ENCODE measurements at regions of chr5 and their contacts with region 1.

Region 1: DNA sequence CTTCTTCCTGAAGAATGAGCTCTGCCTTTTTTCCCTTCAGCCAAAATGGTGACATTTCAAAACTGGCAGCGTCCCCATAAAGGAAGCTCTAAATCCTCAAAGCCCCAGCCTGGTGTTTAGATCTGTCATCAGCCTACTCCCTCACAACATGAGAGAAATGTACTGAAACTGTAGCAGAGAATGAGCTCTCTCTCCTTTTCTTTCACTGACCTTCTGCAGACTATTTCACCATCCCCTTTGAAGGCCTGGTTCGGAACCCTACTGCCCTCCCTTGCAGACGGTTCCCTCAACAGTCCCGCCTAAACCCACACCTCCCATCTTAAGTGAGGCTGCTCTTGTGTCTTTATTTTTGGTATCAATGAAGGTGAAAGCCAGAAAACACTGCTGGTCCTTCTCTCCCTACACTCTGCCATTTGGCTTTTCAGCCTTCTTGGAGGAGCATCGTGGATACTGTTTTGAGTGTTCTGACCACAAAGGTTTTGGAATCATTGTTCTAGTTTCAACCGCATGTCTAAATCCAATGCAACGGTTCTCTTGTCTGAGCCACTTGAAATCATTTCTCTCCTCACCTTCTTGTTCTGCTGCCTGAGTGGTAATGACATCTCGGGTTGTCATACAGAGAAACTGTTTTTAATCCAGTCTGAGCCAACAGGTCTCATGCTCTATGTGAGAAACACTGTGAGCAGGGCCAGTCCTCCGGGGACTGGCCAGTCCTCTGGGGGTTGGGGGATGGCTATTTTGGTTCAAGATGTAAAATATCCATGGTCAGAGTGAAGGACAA is 39.0 kb downstream of the ITK start:
- DNase-seq: peak; percentile 65
- H3K4me3 Mint-ChIP-seq: peak overlapping the region; percentile 45
- H3K27ac Mint-ChIP-seq: peak overlapping the region; percentile 97
- H3K4me1 Mint-ChIP-seq: peaks cover 81% of the 10 kb centered on the region
- H3K27me3 Mint-ChIP-seq: no peaks in the 10 kb centered on the region

Region 2: GRCh38 chr5:156913355-156913718 is 306.3 kb before region 1 on chr5:
- CTCF ChIA-PET with region 1: no interaction called
- intact Hi-C with region 1: no loop called
- DNase-seq: no peak
- H3K4me3 Mint-ChIP-seq: no peak overlapping the region
- H3K27ac Mint-ChIP-seq: peak overlapping the region; percentile 87
- H3K4me1 Mint-ChIP-seq: peaks cover 58% of the 10 kb centered on the region
- H3K27me3 Mint-ChIP-seq: no peaks in the 10 kb centered on the region

Region 3: DNA sequence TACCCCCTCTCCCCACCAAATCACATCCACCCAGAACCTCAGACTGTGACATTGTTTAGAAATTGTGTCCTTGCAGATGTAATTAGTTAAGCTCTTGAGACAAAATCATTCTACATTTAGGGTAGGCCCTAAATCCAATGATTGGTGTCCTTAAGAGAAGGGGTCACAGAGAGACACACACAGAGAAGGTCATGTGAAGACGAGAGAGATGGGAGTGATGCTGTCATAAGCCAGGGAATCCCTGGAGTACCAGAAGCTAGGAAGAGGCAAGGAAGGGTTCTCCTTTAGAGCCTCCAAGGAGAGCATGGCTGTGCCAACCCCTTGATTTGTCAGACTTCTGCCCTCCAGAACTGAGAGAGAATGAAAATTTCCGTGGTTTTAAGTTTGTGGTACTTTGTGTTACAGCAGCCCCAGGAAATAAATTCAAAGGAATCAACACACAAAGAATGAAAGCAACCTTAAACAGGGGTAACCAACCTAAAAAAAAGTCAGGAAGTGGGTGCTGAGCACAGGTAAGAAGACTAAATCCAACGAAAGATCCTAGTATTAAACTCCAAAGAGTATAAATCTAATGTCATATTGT is 290.2 kb before region 1 on chr5:
- CTCF ChIA-PET with region 1: no interaction called
- intact Hi-C with region 1: loop called (anchors 2 kb)
- DNase-seq: peak; percentile 29
- H3K4me3 Mint-ChIP-seq: no peak overlapping the region
- H3K27ac Mint-ChIP-seq: peak overlapping the region; percentile 93
- H3K4me1 Mint-ChIP-seq: peaks cover 81% of the 10 kb centered on the region
- H3K27me3 Mint-ChIP-seq: no peaks in the 10 kb centered on the region

Region 4: DNA sequence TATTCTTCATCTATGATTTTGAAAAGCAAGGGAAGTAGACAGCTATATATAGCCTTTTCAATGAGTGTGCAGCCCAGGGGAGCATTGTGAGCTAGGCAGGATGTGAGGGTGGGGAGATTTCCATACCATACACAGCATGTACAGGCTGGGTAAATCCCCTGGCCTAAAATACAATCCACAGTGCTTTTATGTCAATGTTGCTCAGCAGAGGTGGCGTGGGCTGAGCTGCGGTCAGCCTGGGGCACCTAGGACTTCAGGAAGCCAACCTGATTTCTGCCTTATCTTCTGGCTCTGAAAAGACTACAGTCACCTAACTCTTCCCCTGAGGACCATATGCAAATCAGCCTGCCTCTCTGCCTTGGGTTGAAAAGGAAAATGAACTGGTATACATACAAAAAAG is 47.3 kb before region 1 on chr5:
- CTCF ChIA-PET with region 1: interaction called, 7 read pairs
- intact Hi-C with region 1: loop called (anchors 1 kb)
- DNase-seq: peak; percentile 96
- H3K4me3 Mint-ChIP-seq: peak overlapping the region; percentile 64
- H3K27ac Mint-ChIP-seq: peak overlapping the region; percentile 100
- H3K4me1 Mint-ChIP-seq: peaks cover 86% of the 10 kb centered on the region
- H3K27me3 Mint-ChIP-seq: no peaks in the 10 kb centered on the region

Region 5: GRCh38 chr5:157198277-157198986 is 21.2 kb before region 1 on chr5:
- CTCF ChIA-PET with region 1: interaction called, 10 read pairs
- intact Hi-C with region 1: loop called (anchors 1 kb)
- DNase-seq: peak; percentile 80
- H3K4me3 Mint-ChIP-seq: peak overlapping the region; percentile 48
- H3K27ac Mint-ChIP-seq: peak overlapping the region; percentile 100
- H3K4me1 Mint-ChIP-seq: peaks cover 93% of the 10 kb centered on the region
- H3K27me3 Mint-ChIP-seq: no peaks in the 10 kb centered on the region

Region 6: DNA sequence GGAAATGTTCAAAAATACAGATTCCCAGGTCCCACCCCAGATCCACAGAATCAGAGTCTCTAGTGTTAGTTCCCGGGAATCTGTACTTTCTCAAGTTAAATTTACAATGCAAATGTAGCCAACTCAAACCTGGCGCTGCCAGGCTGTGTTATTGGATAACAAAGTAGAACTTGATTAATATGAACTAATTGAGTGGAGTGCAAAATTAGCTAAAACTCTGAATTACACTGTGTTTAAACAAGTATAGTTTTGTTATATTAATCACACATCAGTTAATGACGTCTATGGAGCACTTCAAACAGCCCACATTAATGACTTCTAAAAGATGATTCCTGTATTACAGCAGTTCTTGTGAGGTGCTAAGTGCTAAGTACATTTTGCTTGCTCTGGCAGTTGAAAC is 13.8 kb after region 1 on chr5:
- CTCF ChIA-PET with region 1: interaction called, 4 read pairs
- intact Hi-C with region 1: loop called (anchors 1 kb)
- DNase-seq: peak; percentile 54
- H3K4me3 Mint-ChIP-seq: peak overlapping the region; percentile 53
- H3K27ac Mint-ChIP-seq: peak overlapping the region; percentile 96
- H3K4me1 Mint-ChIP-seq: peaks cover 82% of the 10 kb centered on the region
- H3K27me3 Mint-ChIP-seq: no peaks in the 10 kb centered on the region

Region 7: GRCh38 chr5:157253547-157253946 is 33.9 kb after region 1 on chr5:
- CTCF ChIA-PET with region 1: interaction called, 6 read pairs
- intact Hi-C with region 1: loop called (anchors 1 kb)
- DNase-seq: no peak
- H3K4me3 Mint-ChIP-seq: no peak overlapping the region
- H3K27ac Mint-ChIP-seq: peak overlapping the region; percentile 97
- H3K4me1 Mint-ChIP-seq: peaks cover 91% of the 10 kb centered on the region
- H3K27me3 Mint-ChIP-seq: no peaks in the 10 kb centered on the region

Region 8: DNA sequence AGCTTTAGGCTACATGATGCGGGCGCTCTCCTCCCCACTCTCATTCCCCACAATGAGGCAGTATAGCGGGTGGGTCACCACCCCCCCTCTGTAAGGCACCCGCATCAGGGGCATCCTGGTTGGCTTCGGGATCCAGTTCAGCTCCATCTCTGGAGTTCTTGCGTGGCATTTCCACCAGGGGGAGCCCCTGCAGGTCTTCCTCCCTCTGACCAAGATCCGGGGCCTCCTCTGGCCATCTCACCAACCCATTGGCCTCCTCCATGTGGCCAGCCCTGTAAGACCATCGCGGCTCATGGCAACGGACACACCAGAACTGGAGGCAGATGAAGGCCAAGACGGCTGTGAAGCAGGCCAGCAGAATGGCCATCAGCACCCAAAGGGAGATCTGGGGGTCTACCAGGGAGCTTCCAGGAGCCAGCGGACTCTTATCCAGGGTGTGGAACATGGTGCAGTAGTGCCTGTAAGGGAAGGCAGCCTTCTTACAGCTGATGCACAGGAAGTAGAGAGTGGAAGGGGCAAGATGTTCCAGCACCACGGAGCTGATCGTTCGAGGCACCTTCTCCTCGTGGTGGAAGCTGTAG is 123.2 kb after region 1 on chr5:
- CTCF ChIA-PET with region 1: no interaction called
- intact Hi-C with region 1: no loop called
- DNase-seq: peak; percentile 51
- H3K4me3 Mint-ChIP-seq: no peak overlapping the region
- H3K27ac Mint-ChIP-seq: no peak overlapping the region
- H3K4me1 Mint-ChIP-seq: peaks cover 38% of the 10 kb centered on the region
- H3K27me3 Mint-ChIP-seq: no peaks in the 10 kb centered on the region

Measured in activated naive CD4-positive, alpha-beta T cell treated with anti-CD3 and anti-CD28 coated beads for 36 hours (primary cell).